ENCODE measurements at regions of chr1 and their contacts with region 1.

Region 1: GRCh38 chr1:109548321-109549267 is at the start of gene GNAI3:
- DNase-seq: peak; percentile 97
- ATAC-seq: peak; percentile 97
- total RNA-seq, gene GNAI3: 2.3 TPM

Region 2: DNA sequence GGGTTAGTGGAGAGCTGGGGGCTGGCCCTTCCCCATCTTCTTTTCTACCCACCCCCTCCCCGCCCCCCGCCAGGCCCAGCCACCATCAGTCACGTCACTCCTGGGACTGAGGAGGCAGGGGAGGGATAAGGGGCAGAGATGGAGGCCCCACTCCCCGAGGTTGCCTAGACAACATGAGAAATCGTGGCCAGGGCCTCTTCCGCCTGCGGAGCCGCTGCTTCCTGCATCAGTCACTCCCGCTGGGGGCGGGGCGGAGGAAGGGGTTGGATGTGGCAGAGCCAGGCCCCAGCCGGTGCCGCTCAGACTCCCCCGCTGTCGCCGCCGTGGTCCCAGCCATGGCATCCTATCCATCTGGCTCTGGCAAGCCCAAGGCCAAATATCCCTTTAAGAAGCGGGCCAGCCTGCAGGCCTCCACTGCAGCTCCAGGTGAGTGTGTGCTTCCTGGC is 72.3 kb after region 1 on chr1:
- intact Hi-C with region 1: loop called (anchors 2 kb)
- DNase-seq: peak; percentile 99
- ATAC-seq: peak; percentile 82

Region 3: GRCh38 chr1:109643385-109644230 is 95.0 kb after region 1 on chr1:
- intact Hi-C with region 1: loop called (anchors 5 kb)
- DNase-seq: peak; percentile 89
- ATAC-seq: peak; percentile 73

Region 4: GRCh38 chr1:109655601-109656519 is 107.3 kb after region 1 on chr1 and contains the start of gene GSTM4:
- intact Hi-C with region 1: no loop called
- DNase-seq: peak; percentile 93
- ATAC-seq: peak; percentile 93
- total RNA-seq, gene GSTM4: 35.1 TPM

Measured in Right ventricle myocardium inferior (tissue), 1 donor.